ENCODE measurements at regions of chr3 and their contacts with region 1.

Region 1: DNA sequence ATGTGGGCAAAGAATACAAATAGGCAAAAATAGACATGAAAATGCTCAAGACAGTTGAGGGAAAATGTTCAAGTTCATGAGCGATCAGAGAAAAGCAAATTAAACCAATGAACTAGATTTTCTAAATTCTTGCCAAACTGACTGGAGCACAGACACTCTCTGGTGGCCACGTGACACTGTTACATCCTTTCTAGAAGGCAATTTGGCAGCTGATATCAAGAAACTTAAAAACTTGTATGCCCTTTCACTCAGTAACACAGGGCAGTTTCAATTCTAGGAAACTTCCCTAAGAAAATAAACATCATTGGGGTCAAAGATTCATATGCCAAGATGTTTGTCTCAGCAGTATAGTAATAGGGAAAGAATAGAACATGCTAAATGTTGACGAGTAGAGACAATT is 52.2 kb downstream of the ABHD5 start:
- DNase-seq: no peak
- ATAC-seq: no peak
- H3K4me3 ChIP-seq: no peak overlapping the region
- H3K27ac ChIP-seq: no peak overlapping the region
- H3K4me1 ChIP-seq: peaks cover 7% of the 10 kb centered on the region
- H3K27me3 ChIP-seq: no peaks in the 10 kb centered on the region
- CTCF ChIP-seq: peak; percentile 50

Region 2: GRCh38 chr3:43606284-43606683 is 136.6 kb before region 1 on chr3:
- CTCF ChIA-PET with region 1: no interaction called
- POLR2A ChIA-PET with region 1: interaction called, 17 read pairs
- intact Hi-C with region 1: no loop called
- DNase-seq: no peak
- ATAC-seq: no peak
- H3K4me3 ChIP-seq: no peak overlapping the region
- H3K27ac ChIP-seq: no peak overlapping the region
- H3K4me1 ChIP-seq: no peaks in the 10 kb centered on the region
- H3K27me3 ChIP-seq: no peaks in the 10 kb centered on the region
- CTCF ChIP-seq: no peak

Region 3: GRCh38 chr3:43892526-43892925 is 149.6 kb after region 1 on chr3:
- CTCF ChIA-PET with region 1: no interaction called
- POLR2A ChIA-PET with region 1: no interaction called
- intact Hi-C with region 1: no loop called
- DNase-seq: no peak
- ATAC-seq: no peak
- H3K4me3 ChIP-seq: no peak overlapping the region
- H3K27ac ChIP-seq: no peak overlapping the region
- H3K4me1 ChIP-seq: no peaks in the 10 kb centered on the region
- H3K27me3 ChIP-seq: no peaks in the 10 kb centered on the region
- CTCF ChIP-seq: no peak